ENCODE measurements at regions of chr10 and their contacts with region 1.

Region 1: DNA sequence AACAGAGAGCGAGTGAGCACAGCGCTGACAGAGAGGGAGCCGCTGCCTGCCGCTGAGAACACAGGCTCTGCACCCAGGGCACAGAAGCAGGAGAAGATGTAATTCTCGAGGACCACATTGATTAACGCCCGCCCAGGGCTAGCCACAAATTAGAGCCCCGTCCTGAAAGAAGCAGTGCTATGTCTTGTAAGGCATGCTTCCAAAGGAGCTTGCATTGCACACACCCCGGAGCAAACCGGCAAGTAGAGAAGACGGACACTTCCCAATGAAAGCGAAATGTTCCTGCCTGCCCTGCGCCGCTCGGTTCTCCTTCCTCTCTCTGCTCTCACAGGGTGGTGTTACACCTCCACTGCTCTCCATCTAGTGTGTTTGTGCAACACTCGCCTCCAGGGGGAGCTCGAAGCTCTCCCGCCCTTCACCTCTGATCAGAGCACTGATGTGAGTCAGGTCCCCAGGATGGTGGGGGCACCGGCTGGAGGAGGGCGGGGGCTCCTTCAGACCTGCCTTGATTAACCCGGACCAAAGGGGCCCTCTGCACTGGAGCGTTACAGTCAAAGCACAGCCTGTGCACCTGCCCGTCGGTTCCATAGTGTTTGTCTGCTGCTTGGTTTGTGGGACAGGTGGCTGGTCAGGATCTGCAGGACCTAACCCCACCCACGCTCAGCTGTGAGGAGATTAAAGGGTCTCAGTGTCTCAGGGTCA is 316.5 kb downstream of the ADARB2 start:
- DNase-seq: peak; percentile 85
- H3K4me3 ChIP-seq: peak overlapping the region; percentile 36 to 53; a peak in 2 of 4 replicates
- H3K27ac ChIP-seq: peak overlapping the region in 1 of 2 experiments; percentile 68; a peak in 2 of 4 replicates
- H3K4me1 ChIP-seq: peaks cover 0 to 5% of the 10 kb centered on the region in 2 experiments; a peak in 2 of 4 replicates
- H3K27me3 ChIP-seq: no peaks in the 10 kb centered on the region
- CTCF ChIP-seq: no peak
- EP300 ChIP-seq: no peak
- RAD21 ChIP-seq: peak; percentile 76

Region 2: GRCh38 chr10:1109795-1110673 is 310.8 kb before region 1 on chr10:
- CTCF ChIA-PET with region 1: interaction called, 10 read pairs
- POLR2A ChIA-PET with region 1: no interaction called
- DNase-seq: peak; percentile 88
- H3K4me3 ChIP-seq: peak overlapping the region in 1 of 2 experiments; percentile 14; a peak in 1 of 4 replicates
- H3K27ac ChIP-seq: peak overlapping the region; percentile 25 to 68; a peak in 2 of 4 replicates
- H3K4me1 ChIP-seq: peaks cover 8 to 9% of the 10 kb centered on the region in 2 experiments; a peak in 2 of 4 replicates
- H3K27me3 ChIP-seq: no peaks in the 10 kb centered on the region
- CTCF ChIP-seq: peak; percentile 69
- EP300 ChIP-seq: no peak
- RAD21 ChIP-seq: peak; percentile 89

Region 3: GRCh38 chr10:1403508-1404322 is 17.1 kb before region 1 on chr10:
- CTCF ChIA-PET with region 1: interaction called, 27 read pairs
- POLR2A ChIA-PET with region 1: no interaction called
- DNase-seq: no peak
- H3K4me3 ChIP-seq: no peak overlapping the region
- H3K27ac ChIP-seq: no peak overlapping the region
- H3K4me1 ChIP-seq: peaks cover 0 to 33% of the 10 kb centered on the region in 2 experiments; a peak in 1 of 4 replicates
- H3K27me3 ChIP-seq: no peaks in the 10 kb centered on the region
- CTCF ChIP-seq: no peak
- EP300 ChIP-seq: no peak
- RAD21 ChIP-seq: no peak

Region 4: DNA sequence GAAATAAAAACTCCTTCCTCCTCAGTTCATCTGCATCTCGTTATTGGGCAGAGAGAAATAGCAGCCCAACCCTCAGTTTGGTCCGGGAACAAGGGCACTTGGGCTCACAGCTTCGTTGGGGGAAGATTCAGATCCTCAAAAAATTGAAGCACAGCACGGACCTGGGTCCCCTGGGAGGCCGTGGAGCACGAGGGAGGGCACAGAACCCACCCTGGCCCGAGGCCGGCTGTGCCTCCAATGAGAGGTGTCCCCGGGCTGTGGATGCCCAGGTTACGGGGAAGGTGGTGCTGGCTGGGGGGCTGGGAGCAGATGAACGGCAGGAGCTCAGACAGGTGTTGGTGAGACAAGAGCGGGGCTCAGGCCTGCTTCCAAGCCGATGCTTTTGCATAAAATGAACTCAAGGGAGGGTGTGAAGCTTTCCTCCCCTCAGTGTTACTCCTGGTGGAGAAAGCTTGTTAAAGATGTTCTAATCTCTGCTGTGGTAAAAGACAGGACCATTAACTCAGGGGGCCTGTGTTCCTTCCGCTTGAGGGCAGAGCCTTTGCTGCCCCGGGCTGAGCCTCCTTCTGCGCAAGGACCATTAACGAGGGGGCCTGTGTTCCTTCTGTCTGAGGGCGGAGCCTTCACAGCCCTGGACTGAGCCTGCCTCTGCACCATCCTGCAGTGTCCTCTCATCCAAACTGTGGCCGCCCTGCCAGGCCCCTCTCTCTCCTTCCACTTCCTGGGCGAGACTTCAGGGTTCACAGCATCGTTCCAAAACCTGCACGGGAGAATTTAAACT is 14.3 kb after region 1 on chr10:
- CTCF ChIA-PET with region 1: interaction called, 19 read pairs
- POLR2A ChIA-PET with region 1: no interaction called
- DNase-seq: no peak
- H3K4me3 ChIP-seq: no peak overlapping the region
- H3K27ac ChIP-seq: no peak overlapping the region
- H3K4me1 ChIP-seq: peaks cover 0 to 9% of the 10 kb centered on the region in 2 experiments; a peak in 1 of 4 replicates
- H3K27me3 ChIP-seq: no peaks in the 10 kb centered on the region
- CTCF ChIP-seq: no peak
- EP300 ChIP-seq: no peak
- RAD21 ChIP-seq: no peak

Region 5: DNA sequence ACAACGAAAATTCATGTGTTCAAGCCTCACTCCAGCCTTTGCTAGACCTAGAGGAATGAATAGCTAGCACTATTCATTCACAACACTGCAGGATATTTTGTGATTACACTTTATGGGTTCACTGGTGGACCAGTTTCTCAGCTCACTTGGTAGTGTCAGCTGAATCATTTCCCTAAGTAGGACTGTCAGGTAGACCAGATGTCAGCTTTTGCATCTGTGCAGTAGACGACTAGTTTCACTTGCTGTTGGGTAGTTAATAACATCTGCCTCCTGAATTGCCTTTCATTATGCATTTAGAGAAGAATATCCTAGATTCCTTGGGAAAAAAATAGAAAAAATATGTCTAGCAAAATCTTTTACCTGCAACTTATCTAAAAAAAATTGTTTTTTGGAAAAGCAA is 20.1 kb after region 1 on chr10:
- CTCF ChIA-PET with region 1: interaction called, 19 read pairs
- POLR2A ChIA-PET with region 1: no interaction called
- DNase-seq: no peak
- H3K4me3 ChIP-seq: no peak overlapping the region
- H3K27ac ChIP-seq: no peak overlapping the region
- H3K4me1 ChIP-seq: no peaks in the 10 kb centered on the region; a peak in 1 of 4 replicates
- H3K27me3 ChIP-seq: no peaks in the 10 kb centered on the region
- CTCF ChIP-seq: no peak
- EP300 ChIP-seq: no peak
- RAD21 ChIP-seq: no peak

Region 6: DNA sequence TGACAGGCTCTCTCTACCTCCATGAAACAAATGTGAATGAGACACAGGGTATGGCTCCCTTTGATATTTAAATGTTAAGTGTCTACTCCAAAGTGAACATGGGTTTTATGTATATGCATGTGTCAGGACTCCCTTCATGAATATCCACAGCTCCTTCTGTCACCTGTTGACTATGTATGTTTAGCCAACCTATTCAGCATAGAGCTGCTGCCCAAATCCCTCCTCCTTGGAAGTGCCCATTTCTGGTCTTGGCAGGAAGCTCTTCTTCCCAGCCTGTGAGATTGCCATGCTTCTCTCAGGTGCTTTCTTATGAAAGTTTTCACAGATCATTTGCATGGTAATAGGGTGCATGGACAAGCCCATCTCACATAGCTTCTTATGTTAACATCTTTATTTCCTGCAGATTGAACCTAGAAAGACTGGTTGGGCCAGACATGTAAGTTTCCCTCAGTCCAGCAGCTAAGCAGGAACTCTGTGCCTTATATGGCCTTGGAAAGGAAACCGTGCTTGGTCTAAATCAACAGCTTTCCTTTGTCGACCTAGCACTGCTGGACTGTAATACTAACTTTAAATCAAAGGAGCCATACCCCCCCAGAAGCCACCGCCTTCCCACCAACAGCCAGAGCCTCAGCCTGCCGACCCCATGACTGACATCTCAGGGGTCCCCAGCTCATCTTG is 27.6 kb after region 1 on chr10:
- CTCF ChIA-PET with region 1: interaction called, 19 read pairs
- POLR2A ChIA-PET with region 1: no interaction called
- DNase-seq: no peak
- H3K4me3 ChIP-seq: no peak overlapping the region
- H3K27ac ChIP-seq: no peak overlapping the region
- H3K4me1 ChIP-seq: peaks cover 0 to 24% of the 10 kb centered on the region in 2 experiments; a peak in 1 of 4 replicates
- H3K27me3 ChIP-seq: no peaks in the 10 kb centered on the region
- CTCF ChIP-seq: no peak
- EP300 ChIP-seq: no peak
- RAD21 ChIP-seq: no peak

Region 7: DNA sequence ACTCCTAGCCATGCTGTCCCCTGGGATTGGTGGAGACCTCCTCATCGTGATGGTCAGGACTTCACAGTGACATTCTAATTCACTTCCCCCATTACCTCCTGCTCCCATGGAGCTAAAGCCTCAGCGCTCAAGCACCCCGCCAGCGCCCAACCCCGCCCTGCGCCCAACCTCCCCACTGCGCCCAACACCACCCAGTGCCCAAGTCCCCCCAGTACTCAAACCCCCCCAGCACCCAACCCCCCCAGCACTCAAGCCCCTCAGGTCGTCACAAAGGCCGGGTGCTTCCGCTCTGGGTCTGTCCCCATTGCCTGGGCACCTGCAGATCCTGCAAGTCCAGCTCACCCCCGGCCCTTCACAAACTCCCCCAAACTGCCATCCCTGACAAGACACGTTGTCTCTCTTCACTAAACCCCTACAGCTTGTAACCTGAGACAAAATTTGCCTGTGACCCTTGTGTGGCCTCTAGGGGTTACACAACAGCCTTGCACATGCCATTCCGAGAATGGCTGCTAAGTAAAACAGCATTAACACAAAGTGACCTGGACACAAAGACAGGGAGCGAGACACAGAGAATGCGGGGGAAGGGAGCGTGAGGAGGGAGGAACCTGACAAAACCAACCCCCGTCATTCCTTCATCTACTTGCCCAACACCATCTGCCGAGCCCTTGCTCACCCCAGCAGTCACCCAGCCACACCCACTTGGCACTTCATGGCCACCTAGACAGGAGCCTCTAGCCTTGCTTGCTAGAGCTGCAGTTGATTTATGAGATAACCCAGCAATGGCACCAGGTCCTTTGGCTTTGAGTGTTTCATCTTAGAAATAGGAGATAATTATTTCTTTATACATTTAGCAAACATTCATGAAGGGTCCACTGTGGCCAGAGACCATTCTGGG is 208.8 kb after region 1 on chr10:
- CTCF ChIA-PET with region 1: no interaction called
- POLR2A ChIA-PET with region 1: no interaction called
- DNase-seq: no peak
- H3K4me3 ChIP-seq: no peak overlapping the region
- H3K27ac ChIP-seq: no peak overlapping the region
- H3K4me1 ChIP-seq: no peaks in the 10 kb centered on the region
- H3K27me3 ChIP-seq: no peaks in the 10 kb centered on the region
- CTCF ChIP-seq: no peak
- EP300 ChIP-seq: no peak
- RAD21 ChIP-seq: no peak